GM10248 (cell line): ENCODE measurements at regions of chr17 and their contacts with region 1.

Region 1: DNA sequence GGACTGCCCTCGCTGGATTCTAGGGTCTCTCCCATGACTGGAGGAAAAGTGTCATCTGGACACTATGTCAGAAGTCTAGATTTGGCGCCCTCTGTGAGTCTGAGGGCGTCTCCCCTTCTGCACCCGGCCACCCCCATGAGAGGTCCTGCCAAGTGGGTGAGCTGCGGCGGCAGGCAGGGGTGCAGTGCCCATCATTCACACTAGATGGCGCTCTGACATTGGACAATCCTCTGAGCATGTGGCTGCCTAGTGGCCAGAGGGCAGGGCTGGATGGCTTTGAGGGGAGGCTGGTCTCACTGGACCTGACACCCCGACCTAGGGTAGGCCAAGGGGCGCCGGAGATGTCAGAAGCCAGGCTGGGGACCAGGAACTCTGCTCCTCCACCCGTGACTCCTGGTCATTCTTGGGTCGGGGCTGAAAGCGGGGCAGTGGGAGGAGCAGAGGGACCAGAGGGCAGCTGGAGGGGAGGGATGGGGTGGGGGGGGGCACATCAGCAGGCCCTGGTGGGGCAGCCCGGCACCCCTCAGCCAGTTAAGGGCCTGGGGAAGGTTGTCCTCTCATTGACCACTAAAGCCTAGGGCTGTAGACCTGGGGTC is 28.0 kb downstream of the MRM1 start:
- DNase-seq: peak; percentile 87
- CTCF ChIP-seq: peak; percentile 99

Region 2: GRCh38 chr17:36611345-36612072 is 17.8 kb before region 1 on chr17:
- CTCF ChIA-PET with region 1: interaction called, 15 read pairs
- POLR2A ChIA-PET with region 1: no interaction called
- DNase-seq: no peak
- CTCF ChIP-seq: no peak

Region 3: GRCh38 chr17:37239690-37240334 is 610.5 kb after region 1 on chr17:
- CTCF ChIA-PET with region 1: interaction called, 32 read pairs
- POLR2A ChIA-PET with region 1: no interaction called
- DNase-seq: peak; percentile 28
- CTCF ChIP-seq: peak; percentile 77